OCI-LY7 (cell line): ENCODE measurements at regions of chr17 and their contacts with region 1.

Region 1: GRCh38 chr17:68613739-68614298 is 12.7 kb upstream of the FAM20A start:
- DNase-seq: peak; percentile 86
- H3K4me3 ChIP-seq: no peak overlapping the region
- H3K27ac ChIP-seq: no peak overlapping the region
- H3K4me1 ChIP-seq: no peaks in the 10 kb centered on the region
- CTCF ChIP-seq: peak; percentile 99

Region 2: GRCh38 chr17:68539548-68540467 is 74.0 kb before region 1 on chr17:
- CTCF ChIA-PET with region 1: interaction called, 5 read pairs
- POLR2A ChIA-PET with region 1: interaction called, 3 read pairs
- intact Hi-C with region 1: loop called (anchors 1 kb)
- DNase-seq: peak; percentile 81
- H3K4me3 ChIP-seq: no peak overlapping the region
- H3K27ac ChIP-seq: peak overlapping the region; percentile 33
- H3K4me1 ChIP-seq: peaks cover 18% of the 10 kb centered on the region
- CTCF ChIP-seq: peak; percentile 86

Region 3: DNA sequence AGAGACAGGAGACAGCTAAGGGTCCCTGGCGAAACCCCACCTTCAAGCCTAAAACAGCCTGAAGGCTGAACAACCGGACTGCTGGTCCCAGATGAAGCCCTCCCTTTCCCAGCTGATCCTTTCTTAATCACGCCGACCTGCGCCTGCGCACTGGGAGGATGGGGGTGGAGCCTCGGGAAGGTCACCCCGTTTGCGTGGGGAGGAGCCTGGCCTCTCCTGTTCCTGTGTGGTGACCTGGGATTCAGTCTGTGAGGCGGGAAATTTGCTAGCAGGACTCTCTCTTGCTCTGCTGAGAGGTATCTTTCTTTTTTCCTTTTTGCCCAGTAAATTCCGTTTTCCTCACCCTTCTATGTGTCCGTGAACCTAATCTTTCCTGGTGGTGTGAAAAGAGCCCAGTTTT is 22.2 kb before region 1 on chr17:
- CTCF ChIA-PET with region 1: no interaction called
- POLR2A ChIA-PET with region 1: no interaction called
- intact Hi-C with region 1: no loop called
- DNase-seq: no peak
- H3K4me3 ChIP-seq: no peak overlapping the region
- H3K27ac ChIP-seq: no peak overlapping the region
- H3K4me1 ChIP-seq: no peaks in the 10 kb centered on the region
- CTCF ChIP-seq: no peak

Region 4: DNA sequence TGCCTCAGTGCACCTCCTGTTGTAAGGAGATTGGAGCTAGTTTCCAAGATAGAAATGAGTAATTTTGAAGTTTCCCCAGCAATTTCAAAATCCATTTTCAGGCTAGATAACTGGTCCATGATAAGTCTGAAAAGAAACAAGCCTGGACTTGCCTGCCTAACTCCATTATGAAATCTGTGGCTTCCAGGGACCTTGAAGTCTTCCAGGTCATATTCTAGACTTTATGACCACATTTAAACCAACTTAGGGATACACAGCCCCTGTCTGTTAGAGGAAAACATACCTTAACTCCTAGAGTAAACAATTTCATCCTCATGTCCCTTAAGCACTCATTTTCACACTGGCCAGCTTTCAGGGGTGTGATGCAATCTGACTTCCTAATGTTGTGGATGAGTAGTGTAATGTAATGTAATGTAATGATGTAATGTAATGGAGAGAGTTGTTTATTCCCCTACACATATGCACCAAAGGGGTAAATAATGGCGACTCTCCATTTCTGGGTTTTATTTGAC is 84.1 kb after region 1 on chr17:
- CTCF ChIA-PET with region 1: no interaction called
- POLR2A ChIA-PET with region 1: no interaction called
- intact Hi-C with region 1: no loop called
- DNase-seq: no peak
- H3K4me3 ChIP-seq: no peak overlapping the region
- H3K27ac ChIP-seq: no peak overlapping the region
- H3K4me1 ChIP-seq: no peaks in the 10 kb centered on the region
- CTCF ChIP-seq: no peak